ENCODE measurements at regions of chr12 and their contacts with region 1.

Region 1: DNA sequence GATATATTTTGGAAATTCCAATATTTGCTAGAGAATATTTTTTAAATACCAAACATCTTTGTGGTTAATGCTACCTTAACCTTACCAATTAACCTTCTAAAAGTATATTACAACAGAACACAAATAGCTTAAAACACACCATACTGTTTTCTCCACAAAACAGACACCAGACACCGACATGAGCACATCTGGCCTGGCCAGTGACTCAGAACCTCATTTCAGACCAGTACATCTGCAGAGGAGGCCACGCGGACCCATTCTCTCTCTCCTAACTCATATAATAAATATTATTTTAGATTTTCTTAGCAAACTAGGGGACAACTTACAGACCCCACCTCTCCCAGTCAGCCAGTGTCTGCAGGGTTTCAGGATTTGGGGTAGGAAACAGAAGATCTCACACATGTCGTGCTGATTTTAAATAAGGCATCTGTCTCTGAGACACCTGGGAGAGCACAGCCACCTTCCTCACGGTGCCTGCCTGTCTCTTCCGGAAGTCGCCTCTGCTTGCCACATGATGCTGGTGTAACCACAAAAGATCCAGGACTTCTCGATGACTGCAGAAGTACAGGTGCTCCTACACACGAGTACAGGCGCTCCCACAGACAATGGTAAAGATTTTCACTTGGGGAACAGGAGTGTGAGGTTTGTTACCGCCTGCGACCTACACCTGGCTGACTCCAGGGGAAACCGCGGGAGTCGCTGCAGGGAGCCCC is 9.7 kb upstream of the ANKLE2 start:
- DNase-seq: no peak
- H3K4me3 ChIP-seq: no peak overlapping the region
- H3K27ac ChIP-seq: no peak overlapping the region
- H3K4me1 ChIP-seq: peaks cover 2 to 5% of the 10 kb centered on the region in 2 experiments; a peak in 2 of 4 replicates
- H3K27me3 ChIP-seq: no peaks in the 10 kb centered on the region
- CTCF ChIP-seq: no peak
- EP300 ChIP-seq: no peak
- RAD21 ChIP-seq: no peak

Region 2: GRCh38 chr12:131525795-131526508 is 1245.3 kb before region 1 on chr12:
- CTCF ChIA-PET with region 1: no interaction called
- POLR2A ChIA-PET with region 1: no interaction called
- DNase-seq: no peak
- H3K4me3 ChIP-seq: no peak overlapping the region
- H3K27ac ChIP-seq: no peak overlapping the region
- H3K4me1 ChIP-seq: no peaks in the 10 kb centered on the region; a peak in 1 of 4 replicates
- H3K27me3 ChIP-seq: no peaks in the 10 kb centered on the region
- CTCF ChIP-seq: no peak
- EP300 ChIP-seq: no peak
- RAD21 ChIP-seq: no peak

Region 3: GRCh38 chr12:132754160-132754932 is 16.9 kb before region 1 on chr12:
- CTCF ChIA-PET with region 1: interaction called, 24 read pairs
- POLR2A ChIA-PET with region 1: no interaction called
- DNase-seq: no peak
- H3K4me3 ChIP-seq: no peak overlapping the region
- H3K27ac ChIP-seq: no peak overlapping the region
- H3K4me1 ChIP-seq: no peaks in the 10 kb centered on the region
- H3K27me3 ChIP-seq: no peaks in the 10 kb centered on the region
- CTCF ChIP-seq: no peak
- EP300 ChIP-seq: no peak
- RAD21 ChIP-seq: no peak

Region 4: DNA sequence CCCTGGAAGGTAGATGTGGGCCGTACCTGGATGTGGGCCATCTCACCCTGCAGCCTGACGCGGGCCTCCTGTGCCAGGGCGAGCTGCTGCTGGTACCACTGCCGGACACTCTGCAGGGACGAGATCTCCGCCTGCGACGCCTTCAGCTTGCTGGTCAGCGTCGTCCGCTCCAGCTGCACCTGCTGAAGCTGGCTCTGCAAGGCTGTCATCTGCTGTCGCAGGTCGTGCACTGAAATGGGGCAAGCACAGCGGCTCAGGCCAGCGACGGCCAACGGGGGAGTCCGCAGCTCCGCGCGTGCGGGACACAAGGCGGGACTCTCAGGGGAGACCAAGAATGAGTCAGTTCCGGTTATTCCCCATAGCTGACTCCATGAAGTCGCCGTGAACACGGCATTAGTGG is 30.5 kb after region 1 on chr12:
- CTCF ChIA-PET with region 1: interaction called, 11 read pairs
- POLR2A ChIA-PET with region 1: no interaction called
- DNase-seq: no peak
- H3K4me3 ChIP-seq: no peak overlapping the region
- H3K27ac ChIP-seq: no peak overlapping the region
- H3K4me1 ChIP-seq: no peaks in the 10 kb centered on the region
- H3K27me3 ChIP-seq: no peaks in the 10 kb centered on the region
- CTCF ChIP-seq: no peak
- EP300 ChIP-seq: no peak
- RAD21 ChIP-seq: no peak

Region 5: GRCh38 chr12:132908145-132909044 is 137.1 kb after region 1 on chr12:
- CTCF ChIA-PET with region 1: no interaction called
- POLR2A ChIA-PET with region 1: no interaction called
- DNase-seq: peak; percentile 96
- H3K4me3 ChIP-seq: peak overlapping the region; percentile 59 to 68
- H3K27ac ChIP-seq: peak overlapping the region; percentile 39 to 53; a peak in 3 of 4 replicates
- H3K4me1 ChIP-seq: peaks cover 0 to 3% of the 10 kb centered on the region in 2 experiments; a peak in 1 of 4 replicates
- H3K27me3 ChIP-seq: no peaks in the 10 kb centered on the region
- CTCF ChIP-seq: no peak
- EP300 ChIP-seq: no peak
- RAD21 ChIP-seq: no peak